HepG2 (cell line): ENCODE measurements at regions of chr17 and their contacts with region 1.

Region 1: DNA sequence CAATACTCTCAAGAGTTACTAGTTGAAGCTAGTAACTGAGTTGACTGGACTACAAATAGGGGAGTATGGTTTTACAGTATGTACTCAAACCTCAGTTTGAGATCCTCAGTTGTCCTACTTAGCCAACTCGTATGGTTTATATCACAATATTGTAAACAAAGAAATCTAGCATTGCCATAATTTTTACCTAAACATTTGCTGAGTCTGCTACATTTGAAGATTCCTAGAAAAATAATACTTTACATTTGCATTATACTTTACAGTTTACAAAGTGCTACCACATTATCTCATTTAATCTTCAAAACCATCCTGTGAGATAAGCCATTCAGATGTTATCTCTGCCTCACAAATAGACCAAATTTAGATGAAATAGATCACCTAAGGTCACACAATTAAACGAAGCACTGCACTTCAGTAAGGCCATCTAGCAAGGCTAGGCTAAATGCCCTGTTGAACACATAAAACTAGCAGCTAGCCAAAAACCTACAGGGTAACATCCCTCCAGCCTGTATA is 16.3 kb downstream of the CBX1 start:
- DNase-seq: no peak
- ATAC-seq: no peak
- H3K4me3 ChIP-seq: no peak overlapping the region
- H3K27ac ChIP-seq: no peak overlapping the region
- H3K4me1 ChIP-seq: no peaks in the 10 kb centered on the region
- H3K27me3 ChIP-seq: no peaks in the 10 kb centered on the region
- CTCF ChIP-seq: no peak
- EP300 ChIP-seq: no peak
- POLR2A ChIP-seq: no peak
- RAD21 ChIP-seq: no peak

Region 2: GRCh38 chr17:48131216-48131824 is 46.3 kb after region 1 on chr17:
- CTCF ChIA-PET with region 1: interaction called, 31 read pairs
- POLR2A ChIA-PET with region 1: no interaction called
- in situ Hi-C with region 1: loop called (anchors 5 kb)
- intact Hi-C with region 1: loop called (anchors 1 kb)
- DNase-seq: peak; percentile 74
- ATAC-seq: peak; percentile 91
- H3K4me3 ChIP-seq: no peak overlapping the region
- H3K27ac ChIP-seq: no peak overlapping the region
- H3K4me1 ChIP-seq: no peaks in the 10 kb centered on the region
- H3K27me3 ChIP-seq: peaks cover 0 to 6% of the 10 kb centered on the region in 2 experiments; a peak in 1 of 5 replicates
- CTCF ChIP-seq: peak; percentile 91
- EP300 ChIP-seq: no peak
- POLR2A ChIP-seq: no peak
- RAD21 ChIP-seq: peak; percentile 75